Right cardiac atrium (tissue), 5 donors: ENCODE measurements at regions of chr5 and their contacts with region 1.

Region 1: DNA sequence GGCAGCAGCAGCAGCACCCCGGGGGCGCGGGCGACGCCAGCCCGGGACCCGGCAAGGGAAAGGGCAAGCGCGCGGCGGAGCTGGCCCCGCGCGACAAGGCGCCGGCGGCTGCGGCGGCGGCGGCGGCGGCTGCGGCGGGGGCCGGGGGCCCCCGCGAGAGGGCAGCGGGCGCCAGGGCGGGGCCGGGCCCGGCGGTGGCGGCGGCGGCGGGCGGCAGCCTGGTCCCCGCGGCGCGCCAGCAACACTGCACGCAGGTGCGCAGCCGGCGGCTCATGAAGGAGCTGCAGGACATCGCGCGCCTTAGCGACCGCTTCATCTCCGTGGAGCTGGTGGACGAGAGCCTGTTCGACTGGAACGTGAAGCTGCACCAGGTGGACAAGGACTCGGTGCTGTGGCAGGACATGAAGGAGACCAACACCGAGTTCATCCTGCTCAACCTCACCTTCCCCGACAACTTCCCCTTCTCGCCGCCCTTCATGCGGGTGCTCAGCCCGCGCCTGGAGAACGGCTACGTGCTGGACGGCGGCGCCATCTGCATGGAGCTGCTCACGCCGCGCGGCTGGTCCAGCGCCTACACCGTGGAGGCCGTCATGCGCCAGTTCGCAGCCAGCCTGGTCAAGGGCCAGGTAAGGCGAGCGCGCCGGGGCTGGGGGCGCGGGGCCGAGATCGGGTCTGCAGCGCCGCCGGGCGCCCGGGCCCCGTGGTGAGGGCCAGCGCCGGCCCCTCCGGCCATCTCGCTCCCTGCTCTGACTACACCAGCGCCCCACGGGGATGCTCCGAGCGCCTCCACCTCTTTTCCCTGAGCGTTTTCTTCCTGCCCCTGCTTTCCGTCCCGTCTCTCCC is at the start of gene UBE2QL1:
- DNase-seq: peak in 1 of 3 donors; percentile 61
- ATAC-seq: peak; percentile 48 to 56
- H3K4me3 ChIP-seq: peak within 1 kb of the TSS; percentile 40
- H3K27ac ChIP-seq: peak within 1 kb of the TSS; percentile 8
- H3K4me1 ChIP-seq: no peaks in the 10 kb centered on the region
- H3K27me3 ChIP-seq: no peaks in the 10 kb centered on the region
- total RNA-seq, gene UBE2QL1: 5.5 to 16.7 (median 14.8) TPM

Region 2: GRCh38 chr5:6383376-6383775 is 65.5 kb before region 1 on chr5:
- intact Hi-C with region 1: loop called in 1 of 4 experiments (anchors 10 kb)
- DNase-seq: no peak
- ATAC-seq: no peak
- H3K4me3 ChIP-seq: no peak overlapping the region
- H3K27ac ChIP-seq: no peak overlapping the region
- H3K4me1 ChIP-seq: no peaks in the 10 kb centered on the region
- H3K27me3 ChIP-seq: no peaks in the 10 kb centered on the region